Common myeloid progenitor, CD34-positive (primary cell): ENCODE measurements at regions of chr5 and their contacts with region 1.

Region 1: DNA sequence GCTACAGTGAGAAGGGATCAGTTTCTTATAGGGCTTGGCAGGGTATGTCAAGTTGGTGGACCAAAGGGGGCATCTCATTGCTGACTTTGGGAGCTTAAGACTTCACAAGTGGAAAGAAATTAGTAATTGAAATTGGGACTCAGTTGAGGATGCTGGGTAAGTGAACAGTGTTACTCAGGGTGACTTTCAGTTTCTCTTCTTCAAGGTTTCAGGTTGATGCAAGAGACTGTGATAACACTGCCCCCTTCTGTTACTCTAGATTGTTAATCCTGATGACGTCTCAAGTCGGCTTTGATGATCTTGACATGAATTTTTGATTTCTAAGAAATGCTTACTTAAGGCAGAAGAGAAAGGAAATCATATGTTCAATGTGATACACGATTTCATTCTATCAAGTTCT is 21.3 kb downstream of the KCTD16 start:
- DNase-seq: peak; percentile 85 to 92 (median 91)
- H3K4me3 ChIP-seq: peak overlapping the region in 3 of 7 experiments; percentile 40 to 61 (median 48)
- H3K27ac ChIP-seq: peak overlapping the region in 1 of 2 experiments; percentile 25
- H3K4me1 ChIP-seq: peaks cover 17 to 52% (median 34%) of the 10 kb centered on the region in 4 experiments
- H3K27me3 ChIP-seq: no peaks in the 10 kb centered on the region

Region 2: DNA sequence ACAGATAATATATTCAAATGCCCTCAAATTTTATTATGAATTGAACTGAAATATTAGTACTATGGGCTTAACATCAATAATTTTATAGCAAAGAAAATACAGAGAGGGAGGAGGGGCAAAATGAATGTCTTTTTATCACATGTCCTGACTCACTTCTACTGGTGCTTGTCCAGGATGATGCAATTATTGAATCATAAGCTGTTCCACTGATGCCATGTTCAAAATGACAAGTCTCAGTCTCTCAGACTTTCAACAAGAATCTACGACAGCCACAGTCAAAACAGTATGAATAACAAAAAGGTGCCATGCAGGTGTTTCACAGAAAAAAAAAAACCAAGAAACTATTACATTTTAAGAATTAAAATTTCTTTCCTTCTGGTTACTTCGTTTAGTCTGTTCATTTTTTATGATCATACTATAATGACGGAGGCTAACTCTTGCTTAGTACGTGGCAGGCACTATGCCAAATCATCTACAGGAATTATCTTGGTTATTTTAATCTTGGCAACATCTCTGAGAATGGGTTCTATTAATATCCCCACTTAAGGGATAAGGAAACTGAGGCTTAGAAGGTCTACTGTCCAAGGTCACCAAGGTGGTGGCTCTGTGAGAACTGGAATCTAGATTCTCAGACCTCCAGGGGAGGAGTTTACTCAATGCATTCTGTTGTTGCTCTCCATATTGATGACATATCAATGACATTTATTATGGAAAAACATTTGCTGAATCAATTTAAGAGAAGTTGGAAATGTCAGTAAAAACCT is 850.0 kb before region 1 on chr5:
- CTCF ChIA-PET with region 1: no interaction called
- POLR2A ChIA-PET with region 1: no interaction called
- DNase-seq: peak in 1 of 3 donors; percentile 16
- H3K4me3 ChIP-seq: no peak overlapping the region
- H3K27ac ChIP-seq: no peak overlapping the region
- H3K4me1 ChIP-seq: peaks cover 0 to 5% (median 3%) of the 10 kb centered on the region in 4 experiments
- H3K27me3 ChIP-seq: no peaks in the 10 kb centered on the region

Region 3: GRCh38 chr5:143860213-143860612 is 331.8 kb before region 1 on chr5:
- CTCF ChIA-PET with region 1: no interaction called
- POLR2A ChIA-PET with region 1: no interaction called
- DNase-seq: no peak
- H3K4me3 ChIP-seq: no peak overlapping the region
- H3K27ac ChIP-seq: no peak overlapping the region
- H3K4me1 ChIP-seq: no peaks in the 10 kb centered on the region
- H3K27me3 ChIP-seq: no peaks in the 10 kb centered on the region

Region 4: GRCh38 chr5:144117412-144117811 is 74.6 kb before region 1 on chr5:
- CTCF ChIA-PET with region 1: no interaction called
- POLR2A ChIA-PET with region 1: no interaction called
- DNase-seq: no peak
- H3K4me3 ChIP-seq: no peak overlapping the region
- H3K27ac ChIP-seq: no peak overlapping the region
- H3K4me1 ChIP-seq: no peaks in the 10 kb centered on the region
- H3K27me3 ChIP-seq: peaks cover 0 to 2% (median 0%) of the 10 kb centered on the region in 5 experiments

Region 5: GRCh38 chr5:144170276-144171024 is 21.5 kb before region 1 on chr5 and contains the starts of genes KCTD16 and YIPF5:
- CTCF ChIA-PET with region 1: interaction called, 22 read pairs
- POLR2A ChIA-PET with region 1: no interaction called
- DNase-seq: peak; percentile 96 to 97 (median 97)
- H3K4me3 ChIP-seq: peak within 1 kb of the TSS; percentile 54 to 99 (median 93)
- H3K27ac ChIP-seq: peak within 1 kb of the TSS; percentile 81 to 93
- H3K4me1 ChIP-seq: peaks cover 3 to 17% (median 9%) of the 10 kb centered on the region in 4 experiments
- H3K27me3 ChIP-seq: peaks cover 0 to 2% (median 0%) of the 10 kb centered on the region in 5 experiments

Region 6: DNA sequence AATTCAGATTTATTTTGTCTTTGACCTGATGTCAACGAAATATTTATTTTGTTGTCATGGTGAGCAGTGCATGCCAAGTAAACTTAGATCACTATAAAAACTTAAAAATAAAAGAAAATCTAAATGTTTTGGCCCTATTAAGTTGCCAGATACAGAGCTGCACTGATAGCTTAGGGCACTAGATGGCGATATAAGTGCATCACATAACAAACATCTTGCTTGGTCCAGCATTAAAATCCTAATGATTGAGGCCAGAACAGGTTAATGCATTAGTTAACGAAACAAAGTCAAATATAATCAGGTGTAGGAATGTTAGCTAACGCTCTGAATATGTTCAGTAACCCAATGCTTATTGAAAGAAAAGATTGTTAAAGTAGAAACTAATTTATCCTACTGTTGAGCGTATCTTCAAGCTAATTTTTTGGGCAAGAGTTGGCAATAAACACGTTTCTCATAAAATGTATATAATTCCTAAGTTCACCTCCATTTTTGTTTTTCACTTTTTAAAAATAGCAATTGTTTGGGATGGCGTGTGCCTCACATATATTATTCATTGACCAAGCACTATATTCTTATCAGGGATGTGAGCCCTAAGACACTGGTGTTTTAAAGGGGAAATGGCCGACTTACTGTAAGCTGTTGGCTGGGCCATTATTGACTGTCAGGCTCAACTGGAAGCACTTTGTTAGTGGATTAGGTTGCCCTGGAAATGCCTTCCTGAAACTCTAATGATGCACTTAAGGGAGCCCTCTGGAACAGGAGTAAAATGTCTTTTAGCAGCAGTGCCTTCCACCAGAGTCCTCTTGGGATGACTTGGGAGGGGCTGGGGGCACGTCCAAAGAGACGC is 12.0 kb after region 1 on chr5:
- CTCF ChIA-PET with region 1: interaction called, 10 read pairs
- POLR2A ChIA-PET with region 1: no interaction called
- DNase-seq: peak; percentile 71 to 82 (median 77)
- H3K4me3 ChIP-seq: no peak overlapping the region
- H3K27ac ChIP-seq: no peak overlapping the region
- H3K4me1 ChIP-seq: peaks cover 0 to 6% (median 5%) of the 10 kb centered on the region in 4 experiments
- H3K27me3 ChIP-seq: peaks cover 6 to 36% (median 26%) of the 10 kb centered on the region in 5 experiments